Sciatic nerve (tissue), 2 donors: ENCODE measurements at regions of chr21 and their contacts with region 1.

Region 1: GRCh38 chr21:45774291-45774690 is 130.8 kb downstream of the PCBP3 start:
- DNase-seq: no peak
- ATAC-seq: no peak

Region 2: DNA sequence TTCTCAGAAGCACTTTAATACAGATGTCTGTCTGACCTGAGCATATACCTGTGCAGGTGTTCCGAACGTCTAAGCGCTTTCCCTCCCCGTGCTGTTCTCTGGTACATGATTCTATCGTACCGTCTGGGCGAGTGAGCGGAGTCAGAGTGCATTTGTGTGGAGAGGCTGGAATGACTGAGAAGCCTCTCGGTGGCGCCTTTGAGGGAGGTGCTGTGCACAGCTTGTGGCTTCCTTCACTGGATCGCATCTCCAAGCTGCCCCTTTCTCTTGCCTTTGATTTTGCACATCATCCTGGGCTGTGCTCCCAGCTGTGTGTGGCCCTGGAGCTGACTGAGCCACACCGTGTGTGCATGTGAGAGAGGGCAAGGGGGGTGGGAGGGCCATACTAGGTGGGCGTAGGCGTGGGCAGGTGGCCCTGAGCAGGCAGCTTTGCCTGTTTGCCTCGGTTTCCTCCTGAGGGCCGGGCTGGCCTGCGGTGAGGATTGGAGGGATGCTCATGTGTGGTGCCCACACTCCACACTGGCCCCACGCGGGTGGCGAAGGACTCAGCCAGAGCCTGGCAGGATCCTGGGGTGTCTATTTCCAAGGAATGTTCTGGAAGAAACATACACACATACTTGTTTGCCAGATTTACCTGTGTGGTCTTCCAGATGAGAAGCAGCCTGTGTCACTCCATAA is 594.6 kb before region 1 on chr21:
- intact Hi-C with region 1: loop called (anchors 10 kb)
- DNase-seq: no peak
- ATAC-seq: no peak